ENCODE measurements at regions of chr1 and their contacts with region 1.

Region 1: GRCh38 chr1:51341876-51342496 is 11.6 kb upstream of the TTC39A start:
- DNase-seq: peak; percentile 50
- H3K4me3 ChIP-seq: no peak overlapping the region
- H3K27ac ChIP-seq: no peak overlapping the region
- H3K4me1 ChIP-seq: no peaks in the 10 kb centered on the region
- CTCF ChIP-seq: peak; percentile 67

Region 2: GRCh38 chr1:51157395-51157794 is 184.6 kb before region 1 on chr1:
- CTCF ChIA-PET with region 1: no interaction called
- POLR2A ChIA-PET with region 1: no interaction called
- intact Hi-C with region 1: no loop called
- DNase-seq: no peak
- H3K4me3 ChIP-seq: no peak overlapping the region
- H3K27ac ChIP-seq: no peak overlapping the region
- H3K4me1 ChIP-seq: no peaks in the 10 kb centered on the region
- CTCF ChIP-seq: no peak

Region 3: GRCh38 chr1:51410568-51411460 is 68.8 kb after region 1 on chr1:
- CTCF ChIA-PET with region 1: no interaction called
- POLR2A ChIA-PET with region 1: no interaction called
- intact Hi-C with region 1: no loop called
- DNase-seq: no peak
- H3K4me3 ChIP-seq: no peak overlapping the region
- H3K27ac ChIP-seq: no peak overlapping the region
- H3K4me1 ChIP-seq: peaks cover under 1% of the 10 kb centered on the region
- CTCF ChIP-seq: no peak

Region 4: DNA sequence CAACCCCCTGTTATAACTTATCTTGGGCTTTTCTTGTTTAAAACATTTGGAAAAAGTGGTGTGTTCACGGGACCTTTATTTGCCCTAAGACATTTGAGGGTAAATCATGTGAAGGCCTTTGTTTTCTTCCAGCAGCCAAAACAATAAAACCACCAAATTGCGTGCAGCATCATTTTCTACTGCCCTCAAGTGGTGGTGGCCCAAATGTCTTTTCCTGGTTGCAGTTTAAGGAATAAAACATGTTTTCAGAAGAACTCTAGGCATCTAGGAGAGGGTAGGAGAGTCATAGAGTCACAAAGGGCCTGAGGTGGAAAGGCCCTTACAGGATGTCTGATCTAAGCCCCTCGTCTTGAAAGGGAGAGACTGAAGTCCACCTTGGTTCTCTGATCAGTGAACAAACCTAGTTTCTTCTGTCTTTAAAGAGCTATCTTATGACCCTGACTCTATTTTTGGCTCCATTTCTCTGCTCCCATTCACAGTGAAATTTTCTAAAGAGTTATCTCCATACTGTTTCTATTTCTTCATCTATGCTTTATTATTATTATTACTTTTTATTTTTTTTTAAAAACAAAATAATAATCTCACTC is 193.1 kb after region 1 on chr1:
- CTCF ChIA-PET with region 1: no interaction called
- POLR2A ChIA-PET with region 1: no interaction called
- intact Hi-C with region 1: loop called (anchors 2 kb)
- DNase-seq: peak; percentile 56
- H3K4me3 ChIP-seq: no peak overlapping the region
- H3K27ac ChIP-seq: no peak overlapping the region
- H3K4me1 ChIP-seq: no peaks in the 10 kb centered on the region
- CTCF ChIP-seq: peak; percentile 94

Region 5: DNA sequence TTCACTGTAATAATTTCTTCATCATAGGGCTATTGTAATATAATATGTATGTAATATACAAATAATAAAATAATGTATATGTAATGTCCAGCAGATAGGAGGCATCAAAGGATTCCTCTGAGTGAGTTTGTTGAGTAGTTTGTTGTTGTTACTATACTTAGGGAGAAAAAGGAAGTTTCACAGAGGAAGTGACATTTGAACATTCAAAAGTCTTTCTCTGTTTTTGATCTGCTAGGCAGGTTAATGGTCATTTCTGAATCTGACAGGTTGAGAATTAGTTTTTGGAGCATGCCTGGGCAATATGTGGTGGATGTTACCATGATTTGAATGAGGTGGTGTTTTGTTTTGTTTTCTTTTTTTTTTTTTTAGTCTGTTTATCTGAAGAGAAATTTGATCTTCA is 434.4 kb after region 1 on chr1:
- CTCF ChIA-PET with region 1: no interaction called
- POLR2A ChIA-PET with region 1: no interaction called
- intact Hi-C with region 1: loop called (anchors 10 kb)
- DNase-seq: no peak
- H3K4me3 ChIP-seq: no peak overlapping the region
- H3K27ac ChIP-seq: no peak overlapping the region
- H3K4me1 ChIP-seq: peaks cover 8% of the 10 kb centered on the region
- CTCF ChIP-seq: no peak